ENCODE measurements at regions of chr13 and their contacts with region 1.

Region 1: DNA sequence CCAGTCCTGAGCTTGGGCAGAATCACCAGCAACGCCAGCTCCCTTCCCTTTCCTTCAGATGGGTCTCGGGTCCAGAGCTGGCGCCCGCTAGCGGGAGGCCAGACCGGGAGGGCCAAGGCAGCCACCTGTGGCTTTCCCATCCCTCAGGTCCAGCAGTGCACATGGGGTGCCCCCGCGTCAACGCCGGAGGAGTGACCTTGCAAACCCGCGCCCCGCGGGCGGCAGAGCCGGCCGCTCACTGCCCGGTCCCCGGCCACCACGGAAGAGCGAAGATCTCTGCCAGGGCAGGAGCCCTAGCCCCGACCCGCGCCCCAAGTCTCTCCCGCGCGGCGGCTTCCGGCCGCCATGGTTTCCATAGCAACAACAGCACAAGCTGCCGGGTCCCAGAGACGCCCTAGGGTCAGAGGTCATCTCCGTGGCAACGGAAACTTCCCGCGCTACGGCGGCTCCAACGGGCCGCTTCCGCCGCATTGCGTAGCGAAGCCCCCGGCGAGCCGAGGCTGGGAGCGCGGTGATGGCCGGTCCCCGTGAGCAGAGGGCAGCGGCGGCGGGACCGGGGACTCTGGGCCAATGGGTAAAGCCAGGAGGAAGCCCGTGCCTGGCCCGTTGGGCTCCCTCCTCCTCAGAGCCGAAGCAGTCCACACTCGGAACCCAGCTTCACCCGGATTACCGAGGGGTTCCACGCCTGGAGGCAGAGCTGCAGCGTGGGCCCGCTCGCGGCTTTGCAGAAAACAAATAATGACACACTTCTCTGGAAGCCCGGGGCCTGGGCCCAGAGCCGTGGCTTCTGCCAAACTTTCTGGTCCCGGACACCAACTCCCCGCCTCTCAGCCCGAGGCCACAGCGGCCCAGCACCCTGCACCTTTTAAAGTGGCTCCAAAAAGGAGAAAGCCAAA is 7.4 kb downstream of the FGF14 start:
- DNase-seq: peak; percentile 97
- H3K4me3 Mint-ChIP-seq: peak overlapping the region; percentile 79
- H3K27ac Mint-ChIP-seq: peak overlapping the region; percentile 69
- H3K4me1 Mint-ChIP-seq: peaks cover 17% of the 10 kb centered on the region
- H3K27me3 Mint-ChIP-seq: peaks cover 16% of the 10 kb centered on the region

Region 2: DNA sequence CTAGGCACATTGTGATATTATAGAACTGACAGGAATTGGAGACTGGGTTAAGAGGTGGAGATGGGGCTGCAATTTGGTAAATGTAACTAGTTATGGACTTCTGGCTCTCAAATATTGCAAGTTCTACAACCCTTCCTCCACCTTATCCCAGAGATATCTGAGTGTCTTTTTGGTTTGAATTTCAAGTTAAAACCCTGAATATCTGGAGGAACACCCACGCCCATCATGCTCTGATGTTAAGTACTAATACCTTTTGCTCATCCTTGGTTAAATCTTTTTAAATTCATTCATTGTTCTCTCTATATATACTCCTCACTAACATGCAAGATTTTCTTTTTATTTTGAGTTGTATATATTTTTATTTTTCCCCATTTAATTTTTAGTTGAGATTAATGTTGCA is 913.0 kb before region 1 on chr13:
- CTCF ChIA-PET with region 1: no interaction called
- intact Hi-C with region 1: no loop called
- DNase-seq: no peak
- H3K4me3 Mint-ChIP-seq: no peak overlapping the region
- H3K27ac Mint-ChIP-seq: no peak overlapping the region
- H3K4me1 Mint-ChIP-seq: no peaks in the 10 kb centered on the region
- H3K27me3 Mint-ChIP-seq: peaks cover 8% of the 10 kb centered on the region

Region 3: DNA sequence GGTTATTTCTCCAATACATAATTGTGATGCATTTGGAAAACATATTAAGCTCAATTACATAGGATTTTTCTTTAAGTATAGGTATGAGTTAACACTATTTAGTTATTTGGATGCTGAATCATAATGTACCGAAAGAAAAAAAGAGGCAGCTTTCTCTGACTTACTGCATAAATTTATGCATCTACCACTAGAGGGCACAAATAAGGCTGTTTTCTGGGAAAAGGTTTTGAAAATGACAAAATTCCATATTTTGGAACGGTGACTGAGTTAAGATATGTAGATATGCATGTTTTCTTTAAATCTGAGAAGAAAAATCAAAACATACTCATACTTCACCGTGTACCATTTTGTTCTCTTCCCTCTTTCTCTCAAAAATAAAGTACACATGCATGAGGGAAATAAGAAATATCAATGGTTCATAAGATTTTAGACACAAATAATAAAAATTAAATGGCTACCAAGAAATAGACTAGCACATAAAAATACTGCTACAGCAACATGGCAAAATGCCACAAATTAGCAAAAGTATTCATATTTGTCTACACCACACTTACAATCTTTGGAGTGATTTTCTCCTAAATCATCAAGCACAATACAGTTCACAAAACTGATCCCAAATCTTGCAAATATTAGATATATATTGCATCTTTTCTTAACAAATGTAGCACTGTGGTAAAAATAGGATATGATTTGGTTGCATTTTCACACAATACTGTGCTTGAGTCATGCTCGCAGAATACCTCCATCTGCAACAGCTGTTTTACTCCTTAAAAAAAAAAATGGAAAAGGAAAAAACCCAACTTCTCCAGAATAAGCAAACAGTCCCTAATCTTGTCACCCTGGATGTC is 252.6 kb before region 1 on chr13:
- CTCF ChIA-PET with region 1: no interaction called
- intact Hi-C with region 1: loop called (anchors 5 kb)
- DNase-seq: no peak
- H3K4me3 Mint-ChIP-seq: no peak overlapping the region
- H3K27ac Mint-ChIP-seq: no peak overlapping the region
- H3K4me1 Mint-ChIP-seq: no peaks in the 10 kb centered on the region
- H3K27me3 Mint-ChIP-seq: no peaks in the 10 kb centered on the region

Region 4: DNA sequence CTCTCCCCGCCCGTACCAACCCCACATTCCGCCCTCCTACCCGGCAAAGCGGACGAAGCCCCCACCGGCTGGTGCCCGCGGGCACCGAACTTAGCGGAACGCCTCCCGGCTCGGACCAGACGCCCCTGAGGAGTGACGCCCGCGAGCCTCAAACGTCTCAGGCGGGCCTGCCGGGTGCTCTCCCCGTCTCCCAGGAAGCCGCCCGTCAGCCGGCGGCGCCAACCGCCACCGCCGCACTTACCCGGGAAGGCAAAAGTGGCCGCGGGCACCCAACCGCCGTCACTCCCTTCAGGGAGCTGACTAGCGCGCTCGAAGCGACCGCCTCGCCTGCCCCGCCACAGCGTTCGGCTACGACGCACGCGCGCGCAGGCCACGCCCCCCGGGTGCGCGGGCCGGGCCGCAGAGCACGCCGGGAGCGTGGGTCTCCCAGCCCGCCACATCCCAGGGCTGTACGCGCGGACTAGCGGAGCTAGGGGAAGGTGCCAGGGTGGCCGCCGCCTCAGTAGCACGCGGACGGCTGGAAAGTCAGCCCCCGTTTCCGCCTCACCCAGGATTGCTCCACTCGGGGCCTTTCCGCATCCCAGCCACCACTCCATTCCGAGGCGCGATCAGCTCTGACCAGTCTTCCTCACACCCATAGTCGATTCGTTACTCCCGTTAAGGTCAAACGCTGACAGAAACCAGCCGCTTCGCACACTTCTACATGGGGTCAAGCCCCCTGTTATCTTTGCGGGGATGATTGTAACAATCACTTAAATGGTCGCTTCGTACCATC is 379.2 kb after region 1 on chr13 and contains the start of gene TEX30:
- CTCF ChIA-PET with region 1: no interaction called
- intact Hi-C with region 1: loop called (anchors 1 kb)
- DNase-seq: peak; percentile 83
- H3K4me3 Mint-ChIP-seq: peak within 1 kb of the TSS; percentile 82
- H3K27ac Mint-ChIP-seq: peak within 1 kb of the TSS; percentile 87
- H3K4me1 Mint-ChIP-seq: peaks cover 34% of the 10 kb centered on the region
- H3K27me3 Mint-ChIP-seq: no peaks in the 10 kb centered on the region
- total RNA-seq, gene TEX30: 20.8 to 23.0 TPM

Measured in activated naive CD4-positive, alpha-beta T cell treated with anti-CD3 and anti-CD28 coated beads for 36 hours (primary cell).